ENCODE measurements at regions of chr16 and their contacts with region 1.

Region 1: DNA sequence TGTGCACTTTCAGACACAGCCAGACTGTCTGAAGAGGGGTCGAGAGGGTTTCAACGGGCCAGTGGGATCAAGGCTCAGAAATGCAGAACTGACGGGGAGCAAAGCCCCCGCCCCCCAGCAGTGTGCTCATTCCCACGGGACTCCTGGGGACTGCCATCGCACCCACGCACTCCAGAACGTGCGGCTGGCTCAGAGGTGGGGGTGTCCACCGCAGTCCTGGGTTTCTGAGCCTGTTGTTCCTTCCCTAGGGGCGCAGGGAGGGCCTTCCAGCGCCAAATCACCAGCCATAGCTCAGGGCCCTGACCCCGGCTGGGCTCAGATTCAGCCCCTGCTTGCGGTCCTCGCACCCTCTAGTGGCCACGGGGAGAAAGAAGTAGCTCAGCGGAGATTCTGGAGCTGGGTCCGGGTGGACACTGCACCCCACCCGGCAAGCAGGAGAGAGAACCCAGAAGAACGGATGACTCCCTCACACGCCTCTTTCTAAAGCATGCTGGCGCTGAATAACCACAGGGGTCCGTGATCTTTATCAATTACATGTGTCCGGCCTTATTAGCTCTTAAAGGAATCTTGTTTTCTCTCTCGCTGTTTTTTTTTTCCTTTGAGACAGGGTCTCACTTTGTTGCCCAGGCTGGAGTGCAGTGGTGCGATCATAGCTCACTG is 45.0 kb upstream of the USP7 start:
- DNase-seq: no peak
- H3K4me3 ChIP-seq: 0 out of 2 replicates have a peak overlapping the region, but pooled peaks have one; percentile 1
- H3K27ac ChIP-seq: no peak overlapping the region
- H3K27me3 ChIP-seq: no peaks in the 10 kb centered on the region
- CTCF ChIP-seq: peak; percentile 89

Region 2: GRCh38 chr16:8567750-8568617 is 440.7 kb before region 1 on chr16:
- CTCF ChIA-PET with region 1: interaction called, 18 read pairs
- POLR2A ChIA-PET with region 1: no interaction called
- DNase-seq: peak; percentile 74
- H3K4me3 ChIP-seq: no peak overlapping the region
- H3K27ac ChIP-seq: peak overlapping the region; percentile 21
- H3K27me3 ChIP-seq: no peaks in the 10 kb centered on the region
- CTCF ChIP-seq: peak; percentile 99

Region 3: DNA sequence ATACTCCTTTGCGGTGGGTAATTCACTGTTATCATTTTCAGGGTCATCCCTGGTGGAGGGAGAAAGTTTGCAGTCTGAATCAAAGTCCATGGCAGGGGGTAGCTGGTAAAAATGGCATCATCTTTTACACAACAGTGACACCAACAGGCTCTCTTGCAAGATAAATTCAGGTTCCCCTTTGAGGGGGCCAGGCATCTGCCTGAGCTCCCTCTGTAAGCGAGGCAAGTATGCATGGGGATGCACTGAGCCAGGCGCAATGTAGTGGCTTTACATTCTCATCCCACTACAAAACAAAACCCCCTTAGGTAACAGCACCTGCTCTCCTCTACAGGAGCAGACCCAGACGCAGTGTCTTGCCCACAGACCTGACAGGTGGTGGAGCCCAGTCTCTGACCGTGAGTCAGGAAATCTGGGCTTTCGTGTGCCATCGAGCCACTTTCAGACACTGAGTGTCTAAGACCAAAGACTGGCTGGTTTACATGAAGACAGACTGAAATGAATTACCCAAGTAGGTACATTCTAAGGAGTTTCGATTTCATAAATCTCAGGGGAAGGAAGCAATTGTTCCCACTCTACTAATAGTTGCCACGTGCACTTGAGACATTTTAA is 108.9 kb before region 1 on chr16:
- CTCF ChIA-PET with region 1: interaction called, 11 read pairs
- POLR2A ChIA-PET with region 1: no interaction called
- DNase-seq: no peak
- H3K4me3 ChIP-seq: no peak overlapping the region
- H3K27ac ChIP-seq: no peak overlapping the region
- H3K27me3 ChIP-seq: no peaks in the 10 kb centered on the region
- CTCF ChIP-seq: no peak

Region 4: GRCh38 chr16:8936421-8936820 is 72.3 kb before region 1 on chr16:
- CTCF ChIA-PET with region 1: interaction called, 16 read pairs
- POLR2A ChIA-PET with region 1: no interaction called
- DNase-seq: no peak
- H3K4me3 ChIP-seq: no peak overlapping the region
- H3K27ac ChIP-seq: no peak overlapping the region
- H3K27me3 ChIP-seq: no peaks in the 10 kb centered on the region
- CTCF ChIP-seq: peak; percentile 61

Region 5: DNA sequence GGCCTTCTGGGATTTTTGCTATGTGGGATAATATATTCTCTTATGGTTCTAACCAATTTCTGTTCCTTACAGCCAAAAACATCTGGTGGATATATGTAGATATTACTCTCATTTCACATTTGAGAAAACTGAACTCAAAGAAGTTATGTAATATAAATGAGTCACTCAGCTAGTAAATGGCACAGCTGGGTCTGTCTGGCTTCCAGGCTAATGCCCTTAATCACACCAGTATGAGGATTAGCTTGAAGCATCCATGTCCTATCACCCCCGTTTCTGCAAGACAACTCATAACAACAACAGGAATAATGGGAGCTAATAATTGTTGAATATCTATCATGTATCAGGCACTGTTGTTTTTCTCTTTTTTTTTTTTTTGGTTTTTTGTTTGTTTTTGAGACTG is 10.6 kb before region 1 on chr16:
- CTCF ChIA-PET with region 1: interaction called, 43 read pairs
- POLR2A ChIA-PET with region 1: interaction called, 3 read pairs
- DNase-seq: peak; percentile 20
- H3K4me3 ChIP-seq: no peak overlapping the region
- H3K27ac ChIP-seq: no peak overlapping the region
- H3K27me3 ChIP-seq: no peaks in the 10 kb centered on the region
- CTCF ChIP-seq: no peak

Region 6: GRCh38 chr16:9047686-9048301 is 39.1 kb after region 1 on chr16:
- CTCF ChIA-PET with region 1: interaction called, 9 read pairs
- POLR2A ChIA-PET with region 1: interaction called, 10 read pairs
- DNase-seq: peak; percentile 98
- H3K4me3 ChIP-seq: no peak overlapping the region
- H3K27ac ChIP-seq: peak overlapping the region; percentile 99
- H3K27me3 ChIP-seq: no peaks in the 10 kb centered on the region
- CTCF ChIP-seq: no peak

Region 7: GRCh38 chr16:9357829-9358228 is 349.1 kb after region 1 on chr16:
- CTCF ChIA-PET with region 1: no interaction called
- POLR2A ChIA-PET with region 1: no interaction called
- DNase-seq: no peak
- H3K4me3 ChIP-seq: no peak overlapping the region
- H3K27ac ChIP-seq: no peak overlapping the region
- H3K27me3 ChIP-seq: no peaks in the 10 kb centered on the region
- CTCF ChIP-seq: no peak